Mammary epithelial cell (primary cell): ENCODE measurements at regions of chr10 and their contacts with region 1.

Region 1: DNA sequence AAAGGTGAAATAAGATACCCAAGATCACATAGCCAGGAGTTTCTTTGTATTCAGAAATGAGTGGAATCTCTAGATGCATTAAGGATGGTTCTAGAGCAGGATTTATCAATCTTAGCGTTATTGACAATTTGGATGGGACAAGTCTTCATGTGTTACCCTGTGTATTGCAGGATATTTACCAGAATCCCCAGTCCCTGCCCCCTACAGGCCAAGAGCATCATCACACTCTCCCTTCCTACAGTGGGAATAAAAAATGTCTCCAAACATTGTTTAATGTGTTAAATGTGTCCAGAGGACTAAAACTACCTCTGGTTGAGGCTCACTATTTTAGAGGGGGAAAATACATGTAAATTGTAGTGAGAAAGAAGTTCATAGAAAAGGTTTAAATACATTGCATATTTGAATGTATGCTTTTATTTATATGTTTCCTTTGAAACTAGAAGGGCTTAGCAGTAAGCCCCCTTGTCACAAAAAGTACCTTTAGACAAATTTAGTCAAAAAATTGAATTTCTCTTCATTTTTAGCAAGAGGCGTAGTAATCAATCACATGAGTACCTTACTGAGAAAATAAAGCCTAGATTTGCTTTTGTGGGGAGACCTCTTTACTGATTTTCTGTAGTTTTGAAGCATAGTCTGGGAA is 141.2 kb downstream of the MLLT10 start:
- DNase-seq: peak; percentile 13
- H3K4me3 ChIP-seq: no peak overlapping the region
- H3K27ac ChIP-seq: no peak overlapping the region
- H3K4me1 ChIP-seq: no peaks in the 10 kb centered on the region
- H3K27me3 ChIP-seq: no peaks in the 10 kb centered on the region
- CTCF ChIP-seq: peak; percentile 80 to 95

Region 2: DNA sequence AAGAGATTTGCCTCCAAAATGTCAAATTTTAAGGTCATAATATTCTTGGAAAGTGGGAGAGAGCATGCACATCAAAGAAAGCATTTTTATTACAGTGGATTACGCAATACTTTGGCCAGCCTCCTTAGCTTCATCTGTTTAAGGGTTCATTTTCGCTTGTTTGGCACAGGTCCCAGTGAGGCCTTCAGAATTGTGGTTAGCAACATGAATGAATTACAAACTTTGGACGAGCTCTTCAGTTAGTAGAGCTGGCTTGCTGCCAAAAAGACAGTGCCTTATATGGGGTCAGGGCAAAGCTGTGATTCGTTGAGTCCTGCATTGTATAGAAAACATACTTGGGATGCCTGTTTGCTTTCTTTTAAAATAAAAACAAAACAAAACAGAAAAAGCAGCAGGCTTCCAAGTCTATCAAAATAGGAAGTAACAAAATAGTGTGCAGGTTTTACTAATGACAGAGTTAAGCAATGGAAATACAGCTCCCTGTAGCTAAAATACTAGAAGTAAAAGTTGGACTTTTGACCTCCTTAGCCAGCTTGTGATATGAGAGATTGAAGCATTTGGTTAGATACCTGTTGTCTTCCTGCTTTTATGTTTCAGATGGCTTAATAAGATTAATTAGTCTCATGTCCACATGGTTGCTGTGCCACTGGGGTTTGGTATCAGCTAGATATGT is 49.6 kb after region 1 on chr10:
- CTCF ChIA-PET with region 1: no interaction called
- dilution Hi-C with region 1: no loop called
- in situ Hi-C with region 1: no loop called
- intact Hi-C with region 1: loop called (anchors 5 kb)
- DNase-seq: peak; percentile 97
- H3K4me3 ChIP-seq: no peak overlapping the region
- H3K27ac ChIP-seq: no peak overlapping the region
- H3K4me1 ChIP-seq: peaks cover 27% of the 10 kb centered on the region
- H3K27me3 ChIP-seq: no peaks in the 10 kb centered on the region
- CTCF ChIP-seq: no peak